ENCODE measurements at regions of chr20 and their contacts with region 1.

Region 1: GRCh38 chr20:47272893-47273590 is 83.5 kb downstream of the ZMYND8 start:
- DNase-seq: peak; percentile 7 to 57
- H3K4me3 ChIP-seq: no peak overlapping the region
- H3K27ac ChIP-seq: no peak overlapping the region
- H3K4me1 ChIP-seq: peaks cover 0 to 2% (median 0%) of the 10 kb centered on the region in 4 experiments; a peak in 1 of 7 replicates
- H3K27me3 ChIP-seq: no peaks in the 10 kb centered on the region
- CTCF ChIP-seq: peak in 2 of 3 experiments; percentile 72 to 80; a peak in 3 of 4 replicates
- EP300 ChIP-seq: no peak
- POLR2A ChIP-seq: no peak
- RAD21 ChIP-seq: peak; percentile 89 to 91

Region 2: GRCh38 chr20:47230811-47231256 is 42.2 kb before region 1 on chr20:
- CTCF ChIA-PET with region 1: interaction called, 13 read pairs
- POLR2A ChIA-PET with region 1: interaction called, 3 read pairs
- DNase-seq: no peak
- H3K4me3 ChIP-seq: no peak overlapping the region
- H3K27ac ChIP-seq: no peak overlapping the region
- H3K4me1 ChIP-seq: peaks cover 0 to 2% (median 0%) of the 10 kb centered on the region in 4 experiments; a peak in 2 of 7 replicates
- H3K27me3 ChIP-seq: no peaks in the 10 kb centered on the region
- CTCF ChIP-seq: no peak
- EP300 ChIP-seq: no peak
- POLR2A ChIP-seq: 0 out of 3 replicates have a peak, but pooled peaks of 1 of the 2 experiments have one; percentile 8
- RAD21 ChIP-seq: no peak

Region 3: DNA sequence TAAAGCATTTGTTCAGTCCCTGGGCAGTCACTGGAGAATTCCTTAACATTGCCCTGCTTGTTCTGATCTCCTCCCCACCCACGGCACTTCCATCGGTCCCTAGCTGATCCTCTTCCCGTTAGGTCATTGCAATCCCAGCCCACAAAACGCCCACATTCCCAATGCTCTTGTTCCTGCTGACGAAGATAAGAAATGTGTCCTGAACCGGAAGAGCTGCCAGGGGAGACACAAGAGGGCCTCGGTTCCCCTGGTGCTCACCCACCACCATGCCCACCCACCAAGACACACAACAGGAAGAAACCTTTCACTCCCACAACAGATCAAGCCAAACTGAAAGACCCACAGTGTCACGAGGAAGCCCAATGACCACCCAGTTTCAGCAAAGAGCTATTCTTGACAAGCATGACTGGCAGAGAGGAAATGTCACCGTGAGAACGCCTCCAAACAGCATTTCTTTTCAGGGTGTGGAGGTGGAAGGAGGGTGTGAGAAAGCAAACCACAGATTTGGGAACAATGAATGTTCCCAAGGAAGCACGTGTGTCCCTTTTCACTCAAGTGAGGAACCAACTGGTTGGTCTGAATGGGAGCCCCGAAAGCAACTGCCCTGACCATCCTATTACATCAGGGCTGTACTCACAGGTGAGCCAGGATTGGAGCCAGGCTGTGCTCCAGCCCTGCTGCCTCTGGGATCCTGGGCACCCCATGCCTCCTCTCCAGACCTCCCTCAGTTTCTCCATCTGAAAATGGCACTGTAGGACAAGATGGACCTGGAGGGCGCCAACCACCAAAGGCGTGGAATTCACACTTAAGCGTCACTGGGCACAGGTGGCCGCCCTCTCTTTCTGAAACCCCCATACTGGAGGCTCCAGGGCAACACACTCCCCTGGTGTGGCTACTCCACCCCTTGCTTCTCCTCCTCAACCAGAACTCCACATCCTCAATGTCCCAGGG is 14.0 kb before region 1 on chr20:
- CTCF ChIA-PET with region 1: interaction called, 24 read pairs
- POLR2A ChIA-PET with region 1: interaction called, 4 read pairs
- DNase-seq: no peak
- H3K4me3 ChIP-seq: no peak overlapping the region
- H3K27ac ChIP-seq: 0 out of 2 replicates have a peak overlapping the region, but pooled peaks have one; percentile 23
- H3K4me1 ChIP-seq: no peaks in the 10 kb centered on the region
- H3K27me3 ChIP-seq: no peaks in the 10 kb centered on the region
- CTCF ChIP-seq: no peak
- EP300 ChIP-seq: no peak
- POLR2A ChIP-seq: no peak
- RAD21 ChIP-seq: no peak

Region 4: GRCh38 chr20:47296950-47297349 is 23.9 kb after region 1 on chr20:
- CTCF ChIA-PET with region 1: interaction called, 13 read pairs
- POLR2A ChIA-PET with region 1: no interaction called
- DNase-seq: no peak
- H3K4me3 ChIP-seq: no peak overlapping the region
- H3K27ac ChIP-seq: no peak overlapping the region
- H3K4me1 ChIP-seq: peaks cover 0 to 9% (median 0%) of the 10 kb centered on the region in 4 experiments; a peak in 1 of 7 replicates
- H3K27me3 ChIP-seq: no peaks in the 10 kb centered on the region
- CTCF ChIP-seq: peak; percentile 19 to 36 (median 26); a peak in 3 of 4 replicates
- EP300 ChIP-seq: no peak
- POLR2A ChIP-seq: no peak
- RAD21 ChIP-seq: peak; percentile 59 to 68

Region 5: DNA sequence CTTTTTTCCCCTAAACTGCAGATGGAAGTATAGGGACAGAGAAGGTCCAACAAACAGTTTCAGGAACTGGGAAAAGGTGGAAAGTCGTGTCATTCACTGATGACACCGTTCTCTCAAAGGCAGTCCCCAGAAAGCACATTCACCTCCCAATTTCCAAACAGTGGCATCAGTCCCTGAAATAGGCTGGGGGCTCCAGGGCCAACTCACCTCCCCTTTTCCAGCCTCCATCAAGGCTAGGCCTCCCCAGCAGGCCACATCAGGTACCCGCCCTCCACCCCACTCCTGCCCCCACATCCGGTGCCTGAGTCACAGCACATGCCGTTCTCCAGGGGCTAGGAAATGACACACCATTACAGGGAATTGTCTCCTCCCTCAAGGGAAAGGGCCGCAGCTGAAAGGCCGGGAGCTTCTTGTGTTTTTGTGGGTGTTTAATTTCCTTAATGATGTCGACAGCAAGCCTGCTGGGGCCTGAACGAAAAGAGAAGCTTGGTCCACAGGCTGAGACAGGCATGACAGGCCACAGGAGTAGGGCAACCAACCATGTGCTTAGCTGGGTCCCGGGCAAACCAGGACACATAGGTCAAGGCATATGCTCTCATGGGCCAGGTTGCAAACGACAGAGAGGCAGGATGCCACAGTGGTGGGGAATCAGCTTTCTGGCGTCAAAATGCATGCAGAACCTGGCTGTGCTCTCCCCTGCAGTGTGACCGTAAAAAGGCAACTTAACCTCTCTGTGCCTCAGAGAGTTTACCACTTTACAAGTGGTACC is 44.3 kb after region 1 on chr20:
- CTCF ChIA-PET with region 1: interaction called, 10 read pairs
- POLR2A ChIA-PET with region 1: interaction called, 71 read pairs
- DNase-seq: no peak
- H3K4me3 ChIP-seq: peak overlapping the region in 2 of 4 experiments; percentile 37 to 58; a peak in 3 of 8 replicates
- H3K27ac ChIP-seq: peak overlapping the region; percentile 97
- H3K4me1 ChIP-seq: peaks cover 51 to 68% (median 55%) of the 10 kb centered on the region in 4 experiments
- H3K27me3 ChIP-seq: no peaks in the 10 kb centered on the region
- CTCF ChIP-seq: no peak
- EP300 ChIP-seq: no peak
- POLR2A ChIP-seq: peak in 1 of 2 experiments; percentile 27; a peak in 2 of 3 replicates
- RAD21 ChIP-seq: no peak

Region 6: GRCh38 chr20:47370850-47371676 is 98.0 kb after region 1 on chr20:
- CTCF ChIA-PET with region 1: interaction called, 12 read pairs
- POLR2A ChIA-PET with region 1: interaction called, 4 read pairs
- DNase-seq: no peak
- H3K4me3 ChIP-seq: no peak overlapping the region
- H3K27ac ChIP-seq: peak overlapping the region; percentile 71; the same call in 1 of the 2 replicates
- H3K4me1 ChIP-seq: peaks cover 4 to 17% (median 11%) of the 10 kb centered on the region in 4 experiments
- H3K27me3 ChIP-seq: no peaks in the 10 kb centered on the region
- CTCF ChIP-seq: no peak
- EP300 ChIP-seq: no peak
- POLR2A ChIP-seq: no peak
- RAD21 ChIP-seq: no peak; a peak in 1 of 4 replicates

Measured in H1 (cell line).